ENCODE measurements at regions of chr7 and their contacts with region 1.

Region 1: DNA sequence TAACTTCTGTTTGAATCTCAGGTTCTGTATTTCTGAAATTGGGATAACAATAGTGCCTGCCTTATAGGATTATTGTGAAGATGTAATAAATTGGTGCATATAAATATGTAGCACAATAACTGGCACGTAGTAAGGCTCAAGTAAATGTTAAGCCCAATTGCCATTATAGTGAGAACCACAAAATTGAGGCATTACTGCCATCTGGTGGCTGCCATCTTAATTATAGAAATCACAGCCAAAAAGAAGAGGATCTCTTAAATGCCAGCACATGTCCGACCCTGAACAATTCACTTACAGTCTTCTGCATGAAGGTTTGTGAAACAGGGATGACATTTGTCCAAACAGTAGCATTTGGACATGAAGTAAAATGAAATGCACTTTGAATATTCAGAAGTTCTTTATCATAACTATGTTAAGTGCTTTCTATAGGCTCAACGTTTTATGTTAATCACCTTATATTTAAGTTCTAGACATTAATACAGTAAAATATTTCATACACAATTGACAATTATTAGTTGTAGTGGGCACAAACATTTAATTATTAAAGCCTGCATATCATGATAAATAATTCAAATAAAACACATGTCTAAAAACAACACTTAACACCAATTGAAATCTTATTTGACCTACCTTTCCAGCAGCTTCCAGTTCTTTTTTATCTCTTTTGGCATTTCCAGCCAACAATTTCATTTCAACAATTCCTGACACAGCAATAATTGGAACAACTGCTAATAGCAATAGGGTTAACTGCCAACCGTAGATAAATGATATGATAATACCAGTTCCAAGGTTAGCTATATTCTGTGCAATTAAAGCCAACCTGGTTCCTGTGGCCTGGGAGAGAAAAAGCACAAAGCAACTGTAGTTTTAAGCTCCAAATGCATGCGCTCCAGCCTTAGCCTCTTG is 58.5 kb downstream of the ABCB4 start:
- DNase-seq: peak; percentile 24
- H3K4me3 Mint-ChIP-seq: no peak overlapping the region
- H3K27ac Mint-ChIP-seq: no peak overlapping the region
- H3K4me1 Mint-ChIP-seq: no peaks in the 10 kb centered on the region
- H3K27me3 Mint-ChIP-seq: peaks cover 10% of the 10 kb centered on the region

Region 2: GRCh38 chr7:86939197-86939814 is 477.6 kb before region 1 on chr7:
- intact Hi-C with region 1: loop called (anchors 5 kb)
- DNase-seq: no peak
- H3K4me3 Mint-ChIP-seq: no peak overlapping the region
- H3K27ac Mint-ChIP-seq: no peak overlapping the region
- H3K4me1 Mint-ChIP-seq: no peaks in the 10 kb centered on the region
- H3K27me3 Mint-ChIP-seq: peaks cover 13% of the 10 kb centered on the region

Region 3: GRCh38 chr7:87312215-87312865 is 104.6 kb before region 1 on chr7:
- intact Hi-C with region 1: loop called (anchors 1 kb)
- DNase-seq: peak; percentile 33
- H3K4me3 Mint-ChIP-seq: no peak overlapping the region
- H3K27ac Mint-ChIP-seq: no peak overlapping the region
- H3K4me1 Mint-ChIP-seq: peaks cover 3% of the 10 kb centered on the region
- H3K27me3 Mint-ChIP-seq: peaks cover 8% of the 10 kb centered on the region

Region 4: GRCh38 chr7:87354749-87355148 is 62.2 kb before region 1 on chr7:
- intact Hi-C with region 1: no loop called
- DNase-seq: no peak
- H3K4me3 Mint-ChIP-seq: no peak overlapping the region
- H3K27ac Mint-ChIP-seq: no peak overlapping the region
- H3K4me1 Mint-ChIP-seq: no peaks in the 10 kb centered on the region
- H3K27me3 Mint-ChIP-seq: no peaks in the 10 kb centered on the region

Region 5: DNA sequence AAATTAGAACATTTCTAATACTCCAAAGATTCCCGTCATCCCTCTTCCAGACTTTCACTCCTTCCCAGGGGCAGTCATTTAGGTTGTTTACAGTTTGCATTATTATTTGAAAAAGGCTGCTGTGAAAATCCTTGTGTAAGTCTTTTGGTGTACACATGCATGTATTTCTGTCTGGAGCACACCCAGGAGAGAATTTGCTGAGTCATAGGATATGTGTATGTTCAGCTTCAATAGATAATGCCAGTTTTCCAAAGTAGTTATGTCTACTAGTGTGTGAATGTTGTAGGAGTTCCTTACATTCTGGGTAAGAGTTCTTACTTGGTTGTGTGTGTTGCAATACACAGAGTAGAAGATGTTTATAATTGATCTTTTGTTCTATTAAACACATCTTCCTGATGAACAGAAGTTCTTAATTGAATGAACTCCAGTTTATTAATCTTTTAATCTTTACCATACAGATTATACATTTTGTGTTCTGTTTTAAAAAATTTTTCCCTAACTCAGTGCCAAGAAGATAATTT is 46.2 kb before region 1 on chr7:
- intact Hi-C with region 1: no loop called
- DNase-seq: no peak
- H3K4me3 Mint-ChIP-seq: no peak overlapping the region
- H3K27ac Mint-ChIP-seq: no peak overlapping the region
- H3K4me1 Mint-ChIP-seq: peaks cover 9% of the 10 kb centered on the region
- H3K27me3 Mint-ChIP-seq: no peaks in the 10 kb centered on the region